ENCODE measurements at regions of chr2 and their contacts with region 1.

Region 1: GRCh38 chr2:24075915-24076848 is at the start of gene SF3B6:
- DNase-seq: peak; percentile 99
- ATAC-seq: peak; percentile 95
- H3K4me3 ChIP-seq: peak within 1 kb of the TSS; percentile 76 to 100 (median 94)
- H3K27ac ChIP-seq: peak within 1 kb of the TSS; percentile 59
- H3K4me1 ChIP-seq: peaks cover 15% of the 10 kb centered on the region
- H3K27me3 ChIP-seq: no peaks in the 10 kb centered on the region; a peak in 1 of 5 replicates
- CTCF ChIP-seq: peak; percentile 52
- EP300 ChIP-seq: peak; percentile 17 to 78; a peak in 2 of 4 replicates
- POLR2A ChIP-seq: peak; percentile 80 to 91
- RAD21 ChIP-seq: peak; percentile 55
- total RNA-seq, gene SF3B6: 182 and 254 TPM in 2 replicates

Region 2: DNA sequence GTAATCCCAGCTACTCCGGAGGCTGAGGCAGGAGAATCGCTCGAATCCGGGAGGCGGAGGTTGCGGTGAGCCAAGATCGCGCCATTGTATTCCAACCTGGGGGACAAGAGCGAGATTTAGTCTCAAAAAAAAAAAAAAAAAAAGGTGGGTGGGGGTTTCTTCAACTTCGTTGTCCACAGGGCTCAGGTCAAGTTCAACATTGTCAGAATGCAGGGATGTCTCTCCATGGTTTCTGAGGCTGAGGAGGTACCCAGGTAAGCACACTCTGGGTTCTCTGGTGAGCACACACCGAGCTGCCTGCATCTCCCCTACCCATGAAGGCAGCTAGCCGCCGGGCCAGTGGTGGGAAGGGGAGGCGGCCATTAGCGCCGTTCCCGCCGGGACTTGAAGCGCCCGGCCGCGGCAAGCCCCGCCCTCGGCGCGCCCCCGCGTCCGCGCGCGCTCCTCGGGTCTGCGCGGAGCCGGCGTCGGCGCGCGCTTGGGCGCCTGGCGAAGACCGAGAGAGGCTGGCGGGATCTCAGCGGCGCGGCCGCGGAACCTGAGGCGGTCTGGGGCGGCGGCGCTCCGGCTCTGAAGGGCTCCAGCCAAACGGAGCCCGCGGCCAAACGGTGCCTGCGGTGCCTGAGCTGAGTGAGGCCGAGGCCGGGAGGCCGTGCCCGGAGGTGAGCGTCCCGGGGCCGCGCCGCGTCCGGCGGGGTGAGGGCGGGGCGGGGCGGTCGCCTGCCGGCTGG is 136.0 kb before region 1 on chr2 and contains the start of gene UBXN2A:
- CTCF ChIA-PET with region 1: no interaction called
- POLR2A ChIA-PET with region 1: interaction called, 5 read pairs
- in situ Hi-C with region 1: no loop called
- intact Hi-C with region 1: loop called (anchors 2 kb)
- DNase-seq: peak; percentile 69
- ATAC-seq: peak; percentile 80
- H3K4me3 ChIP-seq: peak within 1 kb of the TSS; percentile 87 to 96 (median 93)
- H3K27ac ChIP-seq: peak within 1 kb of the TSS; percentile 87
- H3K4me1 ChIP-seq: peaks cover 46% of the 10 kb centered on the region
- H3K27me3 ChIP-seq: peaks cover 0 to 3% of the 10 kb centered on the region in 2 experiments; a peak in 1 of 5 replicates
- CTCF ChIP-seq: no peak
- EP300 ChIP-seq: no peak
- POLR2A ChIP-seq: peak; percentile 81 to 84
- RAD21 ChIP-seq: peak; percentile 76
- total RNA-seq, gene UBXN2A: 20.9 and 29.6 TPM in 2 replicates

Region 3: DNA sequence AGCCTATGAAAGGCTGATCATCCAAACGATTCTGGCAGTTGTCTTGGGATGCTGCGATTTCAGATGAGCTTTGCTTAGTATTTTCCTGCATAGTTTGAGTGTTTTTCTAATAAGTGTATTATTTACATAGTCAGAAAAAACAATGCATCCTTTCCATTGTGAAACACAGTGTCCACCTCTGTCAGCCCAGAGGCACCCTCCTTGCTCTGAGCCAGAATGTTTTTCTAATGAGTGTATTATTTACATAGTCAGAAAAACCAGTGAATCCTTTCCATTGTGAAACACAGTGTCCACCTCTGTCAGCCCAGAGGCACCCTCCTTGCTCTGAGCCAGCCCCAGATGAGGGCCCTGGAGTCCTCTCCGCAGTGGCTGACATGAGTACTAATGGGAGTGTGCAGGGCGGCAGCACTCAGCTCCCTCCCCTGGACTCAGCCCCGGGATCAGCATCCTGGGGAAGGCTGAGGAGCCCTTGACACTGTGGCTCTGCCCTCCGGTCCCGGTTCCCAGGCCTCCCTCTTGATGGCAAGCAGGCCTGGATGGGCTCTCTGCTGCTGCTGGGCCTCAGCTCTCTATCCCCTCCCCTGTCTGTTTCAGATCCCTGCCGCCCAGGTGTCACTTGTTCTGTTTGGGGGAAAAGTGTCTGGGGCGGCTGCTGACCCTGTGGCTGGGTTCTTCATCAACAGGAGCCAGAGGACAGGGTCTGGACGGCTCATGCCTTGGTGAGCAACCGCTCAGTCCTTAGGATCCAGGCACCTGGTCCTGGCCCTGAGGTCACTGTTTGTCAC is 60.4 kb before region 1 on chr2:
- CTCF ChIA-PET with region 1: no interaction called
- POLR2A ChIA-PET with region 1: interaction called, 17 read pairs
- in situ Hi-C with region 1: no loop called
- intact Hi-C with region 1: loop called (anchors 1 kb)
- DNase-seq: peak; percentile 98
- ATAC-seq: peak; percentile 95
- H3K4me3 ChIP-seq: peak overlapping the region; percentile 22 to 70 (median 27); a peak in 5 of 6 replicates
- H3K27ac ChIP-seq: peak overlapping the region; percentile 74
- H3K4me1 ChIP-seq: peaks cover 41% of the 10 kb centered on the region
- H3K27me3 ChIP-seq: no peaks in the 10 kb centered on the region
- CTCF ChIP-seq: peak; percentile 46
- EP300 ChIP-seq: peak; percentile 25 to 81; a peak in 3 of 4 replicates
- POLR2A ChIP-seq: peak; percentile 36 to 78; a peak in 2 of 4 replicates
- RAD21 ChIP-seq: peak; percentile 38

Region 4: GRCh38 chr2:24065341-24065740 is 10.8 kb before region 1 on chr2:
- CTCF ChIA-PET with region 1: no interaction called
- POLR2A ChIA-PET with region 1: interaction called, 15 read pairs
- in situ Hi-C with region 1: no loop called
- intact Hi-C with region 1: no loop called
- DNase-seq: no peak
- ATAC-seq: no peak
- H3K4me3 ChIP-seq: no peak overlapping the region
- H3K27ac ChIP-seq: no peak overlapping the region
- H3K4me1 ChIP-seq: no peaks in the 10 kb centered on the region
- H3K27me3 ChIP-seq: no peaks in the 10 kb centered on the region
- CTCF ChIP-seq: no peak
- EP300 ChIP-seq: no peak
- POLR2A ChIP-seq: no peak
- RAD21 ChIP-seq: no peak

Measured in HepG2 (cell line).